ENCODE measurements at regions of chr5 and their contacts with region 1.

Region 1: DNA sequence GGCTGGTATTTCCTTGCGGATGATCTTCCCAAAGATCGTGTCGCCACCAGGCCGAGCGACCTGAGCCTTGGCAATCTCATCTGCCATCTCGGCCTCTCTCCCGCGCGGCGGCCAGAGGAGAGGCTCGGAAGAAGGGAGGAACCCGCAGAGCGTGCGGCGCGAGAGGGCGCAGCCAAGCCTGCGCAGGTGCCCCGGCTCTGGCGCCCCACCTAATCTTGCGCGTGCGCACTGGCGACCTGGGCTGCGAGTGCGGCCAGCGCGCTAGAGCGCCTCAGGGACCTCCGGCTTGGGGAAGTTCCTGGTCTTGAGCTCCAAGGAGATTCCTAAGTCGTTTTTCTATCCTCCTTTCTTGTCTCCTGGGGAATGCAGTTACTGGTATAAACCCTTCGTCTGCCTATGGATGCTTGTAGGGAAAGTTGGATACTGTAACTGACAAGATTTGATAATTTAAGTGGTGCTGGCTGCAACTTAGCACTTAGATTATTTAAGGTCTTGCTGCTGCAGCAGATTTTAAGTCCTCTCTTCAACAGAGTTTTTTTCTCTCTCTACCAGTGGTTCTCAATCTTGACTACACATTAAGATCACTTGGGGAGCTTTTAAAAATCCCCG is at the start of gene HINT1:
- DNase-seq: peak; percentile 95
- H3K4me3 ChIP-seq: peak within 1 kb of the TSS; percentile 65 to 88 (median 82)
- H3K27ac ChIP-seq: peak within 1 kb of the TSS; percentile 95 to 99 (median 98)
- H3K4me1 ChIP-seq: peaks cover 8 to 48% (median 23%) of the 10 kb centered on the region in 4 donors
- H3K27me3 ChIP-seq: no peaks in the 10 kb centered on the region
- CTCF ChIP-seq: no peak
- EP300 ChIP-seq: no peak
- POLR2A ChIP-seq: peak; percentile 90
- total RNA-seq, gene HINT1: 252 to 668 (median 349) TPM

Region 2: DNA sequence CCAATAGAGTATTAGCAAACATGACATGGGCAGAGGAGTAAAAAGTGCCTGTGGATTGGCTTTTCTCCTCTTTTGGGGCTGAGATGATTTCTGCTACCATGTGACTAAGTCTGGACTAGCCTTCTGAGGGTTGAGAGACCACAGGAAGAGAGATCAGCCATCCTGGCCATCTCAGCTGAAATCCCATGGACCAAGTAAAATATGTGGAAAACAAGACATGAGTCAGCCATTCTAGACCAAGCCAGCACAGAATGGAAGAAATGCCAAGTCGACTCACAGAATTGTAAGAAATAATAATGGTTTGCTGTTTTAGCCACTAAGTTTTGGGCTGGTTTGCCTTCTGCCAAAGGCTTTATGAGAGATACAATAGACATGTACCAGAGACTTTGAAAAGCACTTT is 883.2 kb before region 1 on chr5:
- in situ Hi-C with region 1: no loop called
- intact Hi-C with region 1: no loop called
- DNase-seq: no peak
- H3K4me3 ChIP-seq: no peak overlapping the region
- H3K27ac ChIP-seq: no peak overlapping the region
- H3K4me1 ChIP-seq: no peaks in the 10 kb centered on the region
- H3K27me3 ChIP-seq: no peaks in the 10 kb centered on the region
- CTCF ChIP-seq: no peak
- EP300 ChIP-seq: no peak
- POLR2A ChIP-seq: no peak

Region 3: DNA sequence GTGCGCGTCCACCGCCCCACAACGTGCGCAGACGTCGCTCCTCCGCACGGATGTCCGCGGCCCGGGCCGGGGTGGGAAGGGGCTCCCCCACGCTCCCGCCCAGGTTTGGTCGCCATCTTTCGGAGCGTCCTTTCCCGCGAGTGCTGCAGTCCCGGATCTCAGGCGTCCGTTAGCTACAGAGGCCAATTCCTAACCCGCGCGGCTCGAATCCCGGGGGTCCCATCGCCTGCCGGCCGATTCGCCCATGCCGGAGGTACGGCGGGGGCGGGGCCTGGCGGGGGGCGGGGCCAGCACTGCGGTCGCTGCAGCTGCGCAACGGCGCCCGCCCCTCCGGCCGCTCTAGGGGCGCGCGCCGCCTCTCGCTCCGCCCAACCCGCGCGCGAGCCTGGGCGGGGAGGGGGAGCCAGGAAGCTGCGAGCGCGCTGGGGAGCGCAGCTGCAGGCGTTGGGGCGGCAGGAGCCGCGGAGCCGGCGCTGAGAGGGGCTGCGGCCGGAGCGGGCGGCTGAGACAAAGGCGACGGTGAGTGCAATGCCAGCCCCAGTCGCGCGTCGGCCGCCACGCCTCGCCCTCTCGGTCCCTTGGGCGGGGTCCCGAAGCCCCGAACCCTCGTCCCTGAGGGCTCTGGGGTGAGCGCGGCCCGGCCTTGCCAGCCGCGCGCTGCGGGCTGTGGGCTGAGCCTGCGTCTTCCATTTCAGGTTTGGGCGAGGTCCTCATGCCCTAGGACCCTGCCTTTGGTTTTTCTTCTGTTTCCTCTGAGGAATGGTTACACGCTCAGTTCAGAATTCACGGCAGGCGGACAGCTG is 98.6 kb after region 1 on chr5 and contains the start of gene CDC42SE2:
- in situ Hi-C with region 1: loop called in 1 of 4 experiments (anchors 10 kb)
- intact Hi-C with region 1: no loop called
- DNase-seq: peak; percentile 89
- H3K4me3 ChIP-seq: peak within 1 kb of the TSS; percentile 80 to 100 (median 96)
- H3K27ac ChIP-seq: peak within 1 kb of the TSS; percentile 93 to 98 (median 98)
- H3K4me1 ChIP-seq: peaks cover 5 to 42% (median 23%) of the 10 kb centered on the region in 4 donors
- H3K27me3 ChIP-seq: no peaks in the 10 kb centered on the region
- CTCF ChIP-seq: no peak
- EP300 ChIP-seq: no peak
- POLR2A ChIP-seq: peak; percentile 96
- total RNA-seq, gene CDC42SE2: 71.8 to 118 (median 91.8) TPM

Region 4: DNA sequence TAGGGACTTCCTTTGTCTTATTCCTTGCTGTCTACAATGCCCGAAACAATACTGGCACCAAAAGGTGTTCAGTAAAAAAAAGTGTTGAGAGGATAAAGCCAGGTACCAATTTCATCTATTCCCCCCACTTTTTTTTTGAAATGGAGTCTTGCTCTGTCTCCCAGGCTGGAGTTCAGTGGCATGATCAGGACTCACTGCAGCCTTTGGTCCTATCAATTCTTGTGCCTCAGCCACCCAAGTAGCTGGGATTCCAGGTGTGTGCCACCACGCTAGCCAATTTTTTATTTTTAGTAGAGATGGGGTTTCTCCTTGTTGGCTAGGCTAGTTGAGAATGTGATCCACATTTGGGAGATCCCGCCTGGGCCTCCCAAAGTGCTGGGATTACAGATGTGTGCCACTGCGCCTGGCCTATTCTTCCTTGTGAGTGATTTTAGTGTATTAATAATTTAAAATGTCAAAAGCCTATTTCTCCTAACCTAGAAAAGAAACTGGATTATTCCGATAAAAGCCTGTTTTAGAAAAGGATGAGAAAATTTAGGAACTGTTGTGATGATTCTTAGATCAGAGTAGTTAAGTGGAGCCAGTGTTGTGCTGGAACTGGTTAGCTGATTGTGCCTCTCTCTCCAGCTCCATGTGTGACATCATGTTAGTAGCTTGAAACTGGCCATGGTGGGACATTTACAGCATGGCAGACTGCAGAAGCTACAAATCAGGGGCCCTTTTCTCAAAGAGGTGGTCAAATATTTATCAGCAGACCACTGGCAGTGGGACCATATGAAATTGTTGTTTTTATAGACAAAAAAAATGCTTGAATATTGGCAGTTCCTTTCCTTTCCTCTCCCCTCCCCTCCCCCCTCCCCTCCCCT is 112.9 kb after region 1 on chr5:
- in situ Hi-C with region 1: loop called in 2 of 4 experiments (anchors 10 kb)
- intact Hi-C with region 1: no loop called
- DNase-seq: no peak
- H3K4me3 ChIP-seq: no peak overlapping the region
- H3K27ac ChIP-seq: peak overlapping the region; percentile 35 to 56 (median 50)
- H3K4me1 ChIP-seq: peaks cover 3 to 85% (median 43%) of the 10 kb centered on the region in 4 donors
- H3K27me3 ChIP-seq: no peaks in the 10 kb centered on the region
- CTCF ChIP-seq: no peak
- EP300 ChIP-seq: no peak
- POLR2A ChIP-seq: no peak

Region 5: DNA sequence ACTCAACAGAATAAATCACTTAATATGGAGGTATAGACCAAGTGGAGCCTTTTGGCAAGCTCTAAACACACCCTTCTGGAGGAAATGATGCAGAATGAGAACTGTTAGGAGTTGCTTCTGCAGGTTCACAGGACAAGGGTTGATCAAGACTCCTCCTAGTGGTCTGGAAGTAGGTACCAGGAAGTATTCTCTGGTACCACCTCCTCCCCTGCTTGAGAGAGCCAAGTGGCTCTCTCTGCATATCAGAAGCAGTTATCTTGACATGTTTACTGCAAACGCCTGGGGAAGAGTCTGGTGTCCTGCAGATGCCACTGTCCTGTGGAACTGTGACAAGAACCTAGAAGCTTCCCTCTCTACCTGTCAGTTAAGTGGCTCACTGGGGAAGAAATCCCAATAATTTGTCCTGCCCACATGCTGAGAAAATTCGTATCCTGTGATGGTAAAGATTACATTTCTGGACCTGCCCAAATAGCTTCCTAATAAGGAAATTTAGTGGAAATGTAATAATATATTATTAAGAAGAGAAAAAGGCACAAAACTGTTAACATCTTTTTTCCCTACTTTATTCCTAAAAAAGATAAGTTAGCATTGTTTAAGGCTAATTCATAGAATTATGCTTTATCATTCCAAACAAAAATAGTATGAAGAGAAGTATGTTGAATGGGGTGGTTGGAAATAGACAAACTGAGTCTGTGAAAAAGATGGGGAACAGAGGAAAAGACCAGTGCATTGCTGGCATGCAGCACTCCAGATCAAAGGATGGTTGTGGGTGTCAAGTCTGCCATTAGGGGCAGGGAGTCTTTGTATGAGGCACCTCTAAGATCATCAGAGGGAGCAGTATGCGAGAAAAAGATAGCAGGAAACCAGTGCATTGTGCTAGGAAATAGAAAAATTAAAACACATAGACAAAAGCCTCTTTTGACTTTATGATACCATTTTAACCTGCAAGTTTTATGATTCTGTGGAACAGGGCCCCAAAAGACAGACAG is 217.5 kb after region 1 on chr5:
- in situ Hi-C with region 1: loop called in 2 of 4 experiments (anchors 10 to 25 kb)
- intact Hi-C with region 1: no loop called
- DNase-seq: no peak
- H3K4me3 ChIP-seq: no peak overlapping the region
- H3K27ac ChIP-seq: peak overlapping the region; percentile 27 to 69 (median 61)
- H3K4me1 ChIP-seq: peaks cover 11 to 57% (median 31%) of the 10 kb centered on the region in 4 donors
- H3K27me3 ChIP-seq: no peaks in the 10 kb centered on the region
- CTCF ChIP-seq: peak; percentile 44 to 61 (median 52)
- EP300 ChIP-seq: no peak
- POLR2A ChIP-seq: no peak

Region 6: GRCh38 chr5:131417240-131417869 is 252.1 kb after region 1 on chr5:
- in situ Hi-C with region 1: loop called in 3 of 4 experiments (anchors 10 to 25 kb)
- intact Hi-C with region 1: no loop called
- DNase-seq: peak; percentile 87
- H3K4me3 ChIP-seq: no peak overlapping the region
- H3K27ac ChIP-seq: no peak overlapping the region
- H3K4me1 ChIP-seq: peaks cover 0 to 6% (median 0%) of the 10 kb centered on the region in 4 donors
- H3K27me3 ChIP-seq: no peaks in the 10 kb centered on the region
- CTCF ChIP-seq: peak; percentile 83 to 88 (median 86)
- EP300 ChIP-seq: no peak
- POLR2A ChIP-seq: no peak

Region 7: GRCh38 chr5:131533836-131534235 is 368.6 kb after region 1 on chr5:
- in situ Hi-C with region 1: no loop called
- intact Hi-C with region 1: no loop called
- DNase-seq: no peak
- H3K4me3 ChIP-seq: no peak overlapping the region
- H3K27ac ChIP-seq: no peak overlapping the region
- H3K4me1 ChIP-seq: peaks cover 0 to 19% (median 4%) of the 10 kb centered on the region in 4 donors
- H3K27me3 ChIP-seq: no peaks in the 10 kb centered on the region
- CTCF ChIP-seq: peak in 2 of 5 experiments; percentile 14 to 19
- EP300 ChIP-seq: no peak
- POLR2A ChIP-seq: no peak